Activated naive CD4-positive, alpha-beta T cell treated with anti-CD3 and anti-CD28 coated beads for 36 hours (primary cell): ENCODE measurements at regions of chr18 and their contacts with region 1.

Region 1: DNA sequence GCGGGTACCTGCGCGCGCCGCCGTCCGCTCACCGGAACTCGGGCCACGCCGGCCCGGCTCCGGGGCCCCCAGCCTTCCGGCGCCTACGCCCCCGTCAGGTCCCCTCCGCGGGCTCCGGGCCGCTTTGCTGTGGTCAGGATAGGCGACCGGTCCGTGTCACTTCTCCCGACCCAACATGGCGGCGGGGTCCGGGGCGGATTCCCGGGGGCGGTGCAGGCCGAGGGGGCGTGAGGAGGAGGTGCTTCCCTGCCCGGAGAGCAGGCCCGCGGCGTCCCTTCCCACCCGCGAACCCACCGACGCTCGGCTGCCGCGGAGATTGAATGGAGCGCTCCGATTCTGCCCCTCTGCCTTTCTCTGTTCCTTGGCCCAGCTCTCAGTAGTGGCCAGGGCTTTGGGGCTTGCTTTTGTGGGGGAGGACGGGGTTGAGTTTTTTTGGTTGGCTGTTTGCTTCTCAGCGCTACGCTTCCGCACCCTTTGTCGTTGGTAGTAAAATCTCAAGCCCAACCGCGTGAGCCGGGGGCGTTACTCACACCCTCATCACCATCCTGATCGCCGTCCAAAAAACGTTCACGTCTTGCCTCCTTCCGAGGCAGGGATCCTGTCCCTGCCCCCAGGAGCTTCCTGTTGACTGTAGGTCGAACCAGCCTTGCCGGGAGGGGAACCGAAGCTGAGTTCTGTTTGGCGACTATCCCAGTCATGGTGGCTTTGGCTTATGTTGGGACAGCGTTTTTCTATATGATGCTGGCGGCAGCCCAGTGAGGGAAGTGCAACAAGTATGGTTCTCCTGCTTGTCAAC is 532 bp upstream of the YES1 start:
- DNase-seq: peak; percentile 82
- H3K4me3 Mint-ChIP-seq: peak overlapping the region; percentile 95
- H3K27ac Mint-ChIP-seq: peak overlapping the region; percentile 99
- H3K4me1 Mint-ChIP-seq: peaks cover 54% of the 10 kb centered on the region
- H3K27me3 Mint-ChIP-seq: no peaks in the 10 kb centered on the region

Region 2: DNA sequence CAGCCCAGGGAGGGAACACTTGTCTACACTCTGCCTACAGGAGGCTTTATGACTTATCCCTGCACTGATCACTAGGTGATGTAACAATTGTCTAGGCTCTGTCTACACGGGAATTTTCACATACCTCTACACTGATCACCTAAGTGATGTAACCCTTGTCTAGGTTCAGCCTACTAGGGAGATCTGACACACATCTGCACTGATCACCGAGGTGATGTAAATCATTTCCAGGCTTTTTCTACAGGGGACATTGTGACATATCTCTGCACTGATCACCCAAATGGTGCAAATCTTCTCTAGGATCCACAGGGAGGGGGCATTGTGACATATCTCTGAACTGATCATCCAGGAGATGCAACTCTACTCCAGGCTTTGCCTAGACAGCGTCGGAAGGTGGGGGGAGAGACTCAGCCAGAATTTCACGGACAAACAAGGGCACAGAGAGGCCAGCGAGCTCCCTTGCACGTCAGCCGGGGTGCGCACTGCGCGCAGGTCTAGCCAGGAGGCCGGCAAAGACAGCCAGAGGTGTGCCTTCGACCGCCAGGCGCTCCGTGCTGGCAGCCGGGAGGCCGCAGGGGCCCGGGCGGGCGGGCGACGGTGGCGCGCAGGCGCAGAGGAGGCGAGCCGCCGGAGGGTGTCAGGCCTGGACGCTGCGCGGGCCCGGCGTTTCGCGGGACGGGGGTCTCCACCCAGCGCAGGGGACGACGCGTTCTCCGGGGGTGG is 701.1 kb before region 1 on chr18:
- CTCF ChIA-PET with region 1: no interaction called
- intact Hi-C with region 1: loop called (anchors 2 kb)
- DNase-seq: peak; percentile 69
- H3K4me3 Mint-ChIP-seq: peak overlapping the region; percentile 84
- H3K27ac Mint-ChIP-seq: peak overlapping the region; percentile 96
- H3K4me1 Mint-ChIP-seq: peaks cover 16% of the 10 kb centered on the region
- H3K27me3 Mint-ChIP-seq: no peaks in the 10 kb centered on the region

Region 3: GRCh38 chr18:158128-159036 is 654.2 kb before region 1 on chr18 and contains the start of gene USP14:
- CTCF ChIA-PET with region 1: no interaction called
- intact Hi-C with region 1: loop called (anchors 1 kb)
- DNase-seq: peak; percentile 99
- H3K4me3 Mint-ChIP-seq: peak within 1 kb of the TSS; percentile 85
- H3K27ac Mint-ChIP-seq: peak within 1 kb of the TSS; percentile 92
- H3K4me1 Mint-ChIP-seq: peaks cover 37% of the 10 kb centered on the region
- H3K27me3 Mint-ChIP-seq: no peaks in the 10 kb centered on the region
- total RNA-seq, gene USP14: 90.0 to 96.6 TPM

Region 4: GRCh38 chr18:267688-268552 is 544.7 kb before region 1 on chr18 and contains the start of gene THOC1:
- CTCF ChIA-PET with region 1: no interaction called
- intact Hi-C with region 1: loop called (anchors 1 kb)
- DNase-seq: peak; percentile 97
- H3K4me3 Mint-ChIP-seq: peak within 1 kb of the TSS; percentile 95
- H3K27ac Mint-ChIP-seq: peak within 1 kb of the TSS; percentile 99
- H3K4me1 Mint-ChIP-seq: peaks cover 39% of the 10 kb centered on the region
- H3K27me3 Mint-ChIP-seq: no peaks in the 10 kb centered on the region
- total RNA-seq, gene THOC1: 63.5 to 66.2 TPM

Region 5: GRCh38 chr18:741931-742512 is 70.6 kb before region 1 on chr18:
- CTCF ChIA-PET with region 1: interaction called, 7 read pairs
- intact Hi-C with region 1: loop called (anchors 1 kb)
- DNase-seq: no peak
- H3K4me3 Mint-ChIP-seq: no peak overlapping the region
- H3K27ac Mint-ChIP-seq: no peak overlapping the region
- H3K4me1 Mint-ChIP-seq: no peaks in the 10 kb centered on the region
- H3K27me3 Mint-ChIP-seq: no peaks in the 10 kb centered on the region

Region 6: DNA sequence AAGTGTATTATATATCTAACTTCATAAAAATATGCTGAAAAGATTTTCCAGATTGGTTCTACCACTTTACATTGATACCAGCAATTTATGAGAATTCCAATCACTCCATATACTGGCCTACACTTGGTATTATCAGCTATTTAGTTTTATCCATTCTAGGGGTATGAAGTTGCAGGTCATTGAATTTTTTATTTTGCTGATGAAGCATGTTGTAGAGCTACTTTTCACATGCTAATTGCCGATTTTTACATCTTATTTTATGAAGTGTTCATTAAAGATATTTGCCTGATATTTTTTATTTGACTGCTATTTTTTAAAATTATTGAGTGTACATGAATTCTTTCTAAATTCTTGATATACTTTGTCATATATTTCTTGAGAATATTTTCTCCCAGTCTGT is 634.2 kb after region 1 on chr18:
- CTCF ChIA-PET with region 1: no interaction called
- intact Hi-C with region 1: no loop called
- DNase-seq: no peak
- H3K4me3 Mint-ChIP-seq: no peak overlapping the region
- H3K27ac Mint-ChIP-seq: no peak overlapping the region
- H3K4me1 Mint-ChIP-seq: no peaks in the 10 kb centered on the region
- H3K27me3 Mint-ChIP-seq: no peaks in the 10 kb centered on the region

Region 7: DNA sequence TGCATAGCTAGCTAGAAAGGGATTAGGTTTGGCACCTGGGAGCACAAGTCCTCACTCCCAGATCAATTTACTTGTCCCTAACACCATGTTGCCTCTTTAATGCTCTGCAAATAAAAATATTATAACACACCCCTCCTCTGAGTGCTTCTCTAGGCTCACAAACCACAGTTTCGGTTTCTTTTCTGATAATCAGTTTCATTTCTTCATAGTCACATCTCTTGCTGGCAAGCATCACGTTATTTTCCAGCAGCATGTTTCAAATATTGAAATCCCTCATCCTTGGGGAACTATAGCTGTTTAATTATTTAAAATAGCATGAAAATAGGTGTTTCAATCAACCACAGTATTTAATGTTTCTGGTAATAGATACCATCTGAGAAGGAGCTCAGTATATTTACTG is 1829.1 kb after region 1 on chr18:
- CTCF ChIA-PET with region 1: no interaction called
- intact Hi-C with region 1: loop called (anchors 5 kb)
- DNase-seq: no peak
- H3K4me3 Mint-ChIP-seq: peak overlapping the region; percentile 23
- H3K27ac Mint-ChIP-seq: peak overlapping the region; percentile 86
- H3K4me1 Mint-ChIP-seq: peaks cover 52% of the 10 kb centered on the region
- H3K27me3 Mint-ChIP-seq: no peaks in the 10 kb centered on the region